ENCODE measurements at regions of chr11 and their contacts with region 1.

Region 1: DNA sequence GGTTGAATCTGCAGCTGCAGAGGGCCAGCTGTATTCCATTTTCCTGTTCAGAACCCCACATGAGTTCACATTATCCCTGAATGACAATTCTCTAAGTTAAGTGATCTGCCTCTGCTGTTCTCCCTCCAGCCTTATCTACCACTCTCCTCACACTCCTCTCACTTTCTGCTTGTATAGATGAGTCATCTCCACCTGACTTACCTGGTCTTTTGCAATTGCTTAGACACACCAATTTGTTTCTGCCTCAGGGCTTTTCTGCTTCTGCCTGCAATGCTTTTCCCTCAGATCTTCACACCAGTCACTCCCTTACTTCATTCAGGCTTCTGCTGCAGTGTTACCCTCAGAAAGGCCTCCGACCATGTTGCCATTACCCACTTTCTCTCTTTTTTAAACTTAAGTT is 118.1 kb downstream of the ATM start:
- DNase-seq: no peak
- ATAC-seq: no peak
- H3K4me3 ChIP-seq: no peak overlapping the region
- H3K4me3 Mint-ChIP-seq: no peak overlapping the region
- H3K27ac ChIP-seq: no peak overlapping the region
- H3K27ac Mint-ChIP-seq: no peak overlapping the region
- H3K4me1 ChIP-seq: no peaks in the 10 kb centered on the region
- H3K4me1 Mint-ChIP-seq: no peaks in the 10 kb centered on the region
- H3K27me3 ChIP-seq: no peaks in the 10 kb centered on the region
- H3K27me3 Mint-ChIP-seq: no peaks in the 10 kb centered on the region
- CTCF ChIP-seq: no peak

Region 2: GRCh38 chr11:107916671-107917241 is 424.2 kb before region 1 on chr11:
- CTCF ChIA-PET with region 1: no interaction called
- POLR2A ChIA-PET with region 1: no interaction called
- intact Hi-C with region 1: no loop called
- DNase-seq: peak; percentile 63
- ATAC-seq: peak; percentile 36
- H3K4me3 ChIP-seq: no peak overlapping the region
- H3K4me3 Mint-ChIP-seq: no peak overlapping the region
- H3K27ac ChIP-seq: no peak overlapping the region
- H3K27ac Mint-ChIP-seq: no peak overlapping the region
- H3K4me1 ChIP-seq: peaks cover 0 to 3% of the 10 kb centered on the region in 2 donors
- H3K4me1 Mint-ChIP-seq: peaks cover 2% of the 10 kb centered on the region
- H3K27me3 ChIP-seq: peaks cover 0 to 9% (median 2%) of the 10 kb centered on the region in 4 experiments
- H3K27me3 Mint-ChIP-seq: peaks cover 23% of the 10 kb centered on the region
- CTCF ChIP-seq: peak; percentile 86

Region 3: DNA sequence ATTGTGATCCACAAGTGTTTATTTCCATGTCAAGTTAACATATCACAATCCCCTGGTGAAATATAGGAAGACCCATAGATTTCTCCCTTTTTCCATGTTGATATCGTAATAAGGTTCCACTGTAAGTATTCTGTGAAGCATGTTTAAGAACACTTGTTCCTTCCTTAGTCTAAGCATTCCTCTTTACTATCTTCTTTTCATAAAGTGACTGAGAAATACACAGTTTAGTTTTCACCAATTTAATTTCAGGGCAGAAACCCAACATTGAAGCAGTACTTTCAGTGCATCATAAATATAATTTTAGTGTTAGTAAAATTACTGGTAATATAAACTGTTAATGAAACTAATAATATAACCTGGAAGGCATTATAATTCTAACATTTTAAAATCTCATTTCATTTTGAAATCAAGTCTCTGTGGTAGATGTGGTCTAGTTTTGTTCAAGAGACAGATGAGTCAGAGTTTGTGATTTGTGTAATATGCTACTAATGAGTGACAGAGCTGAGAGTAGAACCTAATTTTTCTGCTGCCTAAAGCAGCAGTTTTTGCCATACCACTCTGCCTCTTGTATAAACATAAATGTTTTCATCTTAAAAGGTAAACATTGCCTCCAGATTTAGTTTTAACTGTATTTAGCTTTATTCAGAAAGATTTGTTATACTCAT is 38.7 kb before region 1 on chr11:
- CTCF ChIA-PET with region 1: no interaction called
- POLR2A ChIA-PET with region 1: no interaction called
- intact Hi-C with region 1: loop called (anchors 5 kb)
- DNase-seq: no peak
- ATAC-seq: no peak
- H3K4me3 ChIP-seq: no peak overlapping the region
- H3K4me3 Mint-ChIP-seq: no peak overlapping the region
- H3K27ac ChIP-seq: no peak overlapping the region
- H3K27ac Mint-ChIP-seq: no peak overlapping the region
- H3K4me1 ChIP-seq: no peaks in the 10 kb centered on the region
- H3K4me1 Mint-ChIP-seq: no peaks in the 10 kb centered on the region
- H3K27me3 ChIP-seq: no peaks in the 10 kb centered on the region
- H3K27me3 Mint-ChIP-seq: no peaks in the 10 kb centered on the region
- CTCF ChIP-seq: no peak

Region 4: DNA sequence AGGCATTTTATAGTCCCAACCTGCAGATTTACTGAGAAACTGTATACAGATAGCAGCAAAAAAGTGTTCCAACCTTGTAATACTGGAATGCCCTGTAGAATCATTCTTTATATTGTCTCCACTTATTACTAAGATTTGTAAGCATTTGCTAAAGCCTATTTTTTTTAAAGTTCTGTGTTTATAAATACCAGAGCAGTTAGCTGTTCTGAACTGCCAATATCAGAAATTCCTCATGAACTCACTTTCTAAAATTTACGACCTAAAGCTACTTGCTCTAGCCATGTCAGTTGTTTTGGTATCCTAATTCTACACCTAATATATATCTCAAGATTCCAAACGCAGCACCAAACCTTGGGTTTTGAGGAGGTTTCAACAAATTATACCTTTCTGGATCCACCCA is 23.2 kb after region 1 on chr11:
- CTCF ChIA-PET with region 1: no interaction called
- POLR2A ChIA-PET with region 1: no interaction called
- intact Hi-C with region 1: no loop called
- DNase-seq: no peak
- ATAC-seq: no peak
- H3K4me3 ChIP-seq: no peak overlapping the region
- H3K4me3 Mint-ChIP-seq: no peak overlapping the region
- H3K27ac ChIP-seq: no peak overlapping the region
- H3K27ac Mint-ChIP-seq: no peak overlapping the region
- H3K4me1 ChIP-seq: no peaks in the 10 kb centered on the region
- H3K4me1 Mint-ChIP-seq: no peaks in the 10 kb centered on the region
- H3K27me3 ChIP-seq: no peaks in the 10 kb centered on the region
- H3K27me3 Mint-ChIP-seq: no peaks in the 10 kb centered on the region
- CTCF ChIP-seq: no peak

Region 5: DNA sequence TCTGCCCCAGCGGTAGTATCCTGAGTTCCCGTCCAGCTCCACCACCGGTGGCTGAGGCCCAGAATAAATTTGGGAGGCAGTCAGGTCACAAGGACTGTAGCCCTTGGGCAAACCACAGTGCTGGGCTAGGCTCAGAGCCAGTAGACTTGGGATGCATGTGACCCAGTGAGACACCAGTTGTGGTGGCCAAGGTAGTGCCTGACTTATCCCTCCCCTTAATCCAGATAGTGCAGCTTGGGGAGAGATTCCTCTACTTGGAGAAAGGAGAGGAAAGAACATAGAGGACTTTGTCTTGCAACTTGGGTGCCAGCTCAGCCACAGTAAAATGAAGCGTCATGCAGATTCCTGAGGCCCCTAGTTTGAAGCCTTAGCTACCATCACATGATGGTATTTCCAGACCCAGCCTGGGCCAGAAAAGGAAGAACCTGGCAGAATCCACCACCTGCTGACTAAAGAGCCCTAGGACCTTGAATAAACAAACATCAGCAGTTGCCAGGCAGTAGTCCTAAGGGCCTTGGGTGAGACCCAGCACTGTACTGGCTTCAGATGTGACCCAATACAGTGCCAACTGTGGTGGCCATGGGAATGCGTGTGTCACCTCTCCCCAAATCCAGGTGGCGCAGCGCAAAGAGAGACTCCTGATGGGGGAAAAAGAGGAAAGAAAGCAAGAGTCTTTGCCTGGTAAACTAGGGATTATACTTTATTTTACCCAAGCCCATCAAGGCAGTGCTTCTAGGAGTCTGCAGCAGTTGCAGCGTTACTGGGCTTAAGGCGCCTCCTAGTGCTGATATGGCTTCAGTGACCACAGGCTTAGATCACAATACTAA is 306.9 kb after region 1 on chr11:
- CTCF ChIA-PET with region 1: interaction called, 5 read pairs
- POLR2A ChIA-PET with region 1: no interaction called
- intact Hi-C with region 1: loop called (anchors 10 kb)
- DNase-seq: peak; percentile 66
- ATAC-seq: peak; percentile 70
- H3K4me3 ChIP-seq: no peak overlapping the region
- H3K4me3 Mint-ChIP-seq: no peak overlapping the region
- H3K27ac ChIP-seq: no peak overlapping the region
- H3K27ac Mint-ChIP-seq: no peak overlapping the region
- H3K4me1 ChIP-seq: no peaks in the 10 kb centered on the region
- H3K4me1 Mint-ChIP-seq: no peaks in the 10 kb centered on the region
- H3K27me3 ChIP-seq: peaks cover 0 to 7% (median 0%) of the 10 kb centered on the region in 4 experiments
- H3K27me3 Mint-ChIP-seq: peaks cover 8% of the 10 kb centered on the region
- CTCF ChIP-seq: peak; percentile 71

Measured in B cell (primary cell).